Activated CD4-positive, alpha-beta memory T cell treated with anti-CD3 and anti-CD28 coated beads for 36 hours (primary cell): ENCODE measurements at regions of chr12 and their contacts with region 1.

Region 1: DNA sequence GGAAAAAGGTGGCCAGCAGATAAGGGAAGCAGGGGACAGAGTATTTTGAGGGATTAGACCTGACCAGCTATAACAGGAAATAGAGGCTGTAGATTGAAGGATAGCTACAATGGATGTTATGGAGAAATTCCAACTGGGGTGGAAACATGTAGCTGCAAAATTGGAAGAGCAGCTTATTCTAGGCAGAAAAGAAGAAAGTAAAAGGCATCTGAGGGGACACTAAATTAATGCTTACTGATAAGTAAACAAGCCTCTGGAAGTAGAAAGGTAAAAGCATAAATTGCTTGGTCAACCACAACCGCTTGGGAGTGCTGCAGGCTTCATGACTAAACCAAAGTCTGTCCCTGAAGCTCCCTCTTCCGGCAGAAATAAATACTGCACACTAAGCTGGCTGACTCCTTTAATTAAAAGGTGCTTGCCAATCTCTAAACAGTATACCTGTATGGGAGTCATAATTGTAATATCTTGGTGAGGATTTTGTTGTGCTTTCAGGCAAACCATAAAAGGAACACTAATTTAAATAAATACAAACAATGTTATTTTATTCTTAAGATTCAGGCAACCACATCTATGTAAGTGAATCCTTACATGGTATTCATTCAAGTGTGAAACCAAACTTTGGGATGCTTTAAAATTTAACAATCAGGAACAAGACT is 7.7 kb downstream of the UBC start:
- DNase-seq: peak; percentile 90
- H3K4me3 Mint-ChIP-seq: no peak overlapping the region
- H3K27ac Mint-ChIP-seq: peak overlapping the region; percentile 25
- H3K4me1 Mint-ChIP-seq: peaks cover 24% of the 10 kb centered on the region
- H3K27me3 Mint-ChIP-seq: no peaks in the 10 kb centered on the region

Region 2: DNA sequence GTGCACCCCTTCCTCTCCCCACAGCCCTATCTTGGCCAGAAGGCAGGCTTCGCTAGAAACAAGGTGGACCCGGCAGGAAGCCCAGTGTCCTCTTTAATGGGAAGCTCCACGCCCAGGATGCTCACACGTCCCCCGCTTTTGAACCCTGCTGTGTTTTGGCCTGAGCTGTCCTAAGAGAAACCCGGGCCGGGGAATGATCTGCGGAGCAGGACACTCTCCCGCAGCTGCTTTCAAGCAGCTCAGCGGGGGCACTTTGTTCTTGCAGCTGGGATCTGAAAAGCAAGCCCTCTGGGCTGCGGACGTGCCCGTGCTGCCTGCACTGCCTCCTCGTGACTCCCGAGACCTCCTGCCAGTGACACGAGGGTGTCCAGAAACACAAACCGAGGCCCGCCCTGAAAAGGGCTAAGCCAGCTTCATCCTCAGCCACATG is 73.0 kb before region 1 on chr12:
- CTCF ChIA-PET with region 1: no interaction called
- POLR2A ChIA-PET with region 1: no interaction called
- intact Hi-C with region 1: no loop called
- DNase-seq: no peak
- H3K4me3 Mint-ChIP-seq: no peak overlapping the region
- H3K27ac Mint-ChIP-seq: no peak overlapping the region
- H3K4me1 Mint-ChIP-seq: no peaks in the 10 kb centered on the region
- H3K27me3 Mint-ChIP-seq: no peaks in the 10 kb centered on the region

Region 3: GRCh38 chr12:124863416-124864325 is 43.1 kb before region 1 on chr12 and contains the start of gene SCARB1:
- CTCF ChIA-PET with region 1: interaction called, 3 read pairs
- POLR2A ChIA-PET with region 1: no interaction called
- intact Hi-C with region 1: loop called (anchors 5 kb)
- DNase-seq: peak; percentile 88
- H3K4me3 Mint-ChIP-seq: peak within 1 kb of the TSS; percentile 71
- H3K27ac Mint-ChIP-seq: peak within 1 kb of the TSS; percentile 44
- H3K4me1 Mint-ChIP-seq: peaks cover 18% of the 10 kb centered on the region
- H3K27me3 Mint-ChIP-seq: peaks cover 3% of the 10 kb centered on the region
- total RNA-seq, gene SCARB1: 11.4 to 12.8 TPM

Region 4: DNA sequence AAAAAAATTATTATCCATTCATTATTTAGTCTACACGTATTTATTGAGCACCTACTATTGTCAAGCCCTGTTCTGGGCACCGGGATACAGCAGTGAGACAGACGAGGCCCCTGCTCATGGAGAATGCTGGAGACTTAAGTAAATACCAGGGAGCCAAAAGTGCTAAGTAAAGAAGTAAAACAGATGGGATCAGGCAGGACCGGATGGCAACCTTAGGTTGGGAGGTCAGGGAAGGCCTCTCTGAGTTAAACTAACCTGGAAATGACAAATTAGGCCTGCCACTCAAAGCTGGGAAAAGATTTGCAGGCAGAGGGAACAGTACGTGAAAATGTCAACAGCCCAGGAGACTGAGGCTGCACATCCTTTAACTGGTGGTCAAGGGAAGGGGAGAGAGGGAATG is 11.6 kb before region 1 on chr12:
- CTCF ChIA-PET with region 1: interaction called, 11 read pairs
- POLR2A ChIA-PET with region 1: interaction called, 3 read pairs
- intact Hi-C with region 1: no loop called
- DNase-seq: no peak
- H3K4me3 Mint-ChIP-seq: no peak overlapping the region
- H3K27ac Mint-ChIP-seq: no peak overlapping the region
- H3K4me1 Mint-ChIP-seq: peaks cover 16% of the 10 kb centered on the region
- H3K27me3 Mint-ChIP-seq: no peaks in the 10 kb centered on the region

Region 5: DNA sequence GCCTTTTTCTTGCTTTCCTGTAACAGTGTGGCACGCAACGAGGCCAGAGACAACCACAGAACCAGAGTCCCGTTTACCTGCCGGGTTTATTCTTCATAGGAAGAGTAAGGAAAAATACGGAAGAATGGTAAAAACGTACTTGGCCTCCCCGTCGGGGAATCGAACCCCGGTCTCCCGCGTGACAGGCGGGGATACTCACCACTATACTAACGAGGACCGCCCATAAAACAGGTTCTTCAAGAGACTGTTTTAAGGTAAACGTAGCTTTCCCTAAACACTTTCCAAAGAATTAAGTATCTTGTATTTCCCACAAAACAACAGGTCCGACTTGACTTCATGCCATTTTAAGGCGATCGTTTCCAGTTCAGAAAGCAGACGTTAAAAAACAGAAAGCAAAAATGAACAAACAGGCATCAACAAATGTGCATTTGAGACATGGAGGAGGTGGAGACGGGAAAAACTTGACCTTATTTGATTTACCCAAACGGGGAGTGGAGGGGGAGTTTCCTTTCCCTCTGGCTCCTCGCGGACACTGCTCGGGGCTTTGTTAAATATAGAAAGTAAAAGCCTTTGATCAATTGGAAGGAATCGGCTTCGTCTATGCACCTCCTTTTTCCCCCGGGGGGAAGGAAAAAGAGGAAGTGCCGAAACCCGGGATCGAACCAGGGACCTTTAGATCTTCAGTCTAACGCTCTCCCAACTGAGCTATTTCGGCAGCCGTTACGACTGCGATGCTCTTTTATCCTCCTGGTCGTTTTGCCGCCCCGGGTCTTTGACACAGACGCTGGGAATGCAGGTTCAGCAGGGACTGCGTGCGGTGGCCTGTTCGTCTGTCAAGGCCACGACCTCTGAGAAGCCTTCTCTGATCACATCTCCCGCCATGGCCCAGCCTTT is 20.7 kb after region 1 on chr12:
- CTCF ChIA-PET with region 1: interaction called, 11 read pairs
- POLR2A ChIA-PET with region 1: interaction called, 3 read pairs
- intact Hi-C with region 1: no loop called
- DNase-seq: peak; percentile 97
- H3K4me3 Mint-ChIP-seq: peak overlapping the region; percentile 94
- H3K27ac Mint-ChIP-seq: peak overlapping the region; percentile 96
- H3K4me1 Mint-ChIP-seq: peaks cover 32% of the 10 kb centered on the region
- H3K27me3 Mint-ChIP-seq: peaks cover 5% of the 10 kb centered on the region

Region 6: DNA sequence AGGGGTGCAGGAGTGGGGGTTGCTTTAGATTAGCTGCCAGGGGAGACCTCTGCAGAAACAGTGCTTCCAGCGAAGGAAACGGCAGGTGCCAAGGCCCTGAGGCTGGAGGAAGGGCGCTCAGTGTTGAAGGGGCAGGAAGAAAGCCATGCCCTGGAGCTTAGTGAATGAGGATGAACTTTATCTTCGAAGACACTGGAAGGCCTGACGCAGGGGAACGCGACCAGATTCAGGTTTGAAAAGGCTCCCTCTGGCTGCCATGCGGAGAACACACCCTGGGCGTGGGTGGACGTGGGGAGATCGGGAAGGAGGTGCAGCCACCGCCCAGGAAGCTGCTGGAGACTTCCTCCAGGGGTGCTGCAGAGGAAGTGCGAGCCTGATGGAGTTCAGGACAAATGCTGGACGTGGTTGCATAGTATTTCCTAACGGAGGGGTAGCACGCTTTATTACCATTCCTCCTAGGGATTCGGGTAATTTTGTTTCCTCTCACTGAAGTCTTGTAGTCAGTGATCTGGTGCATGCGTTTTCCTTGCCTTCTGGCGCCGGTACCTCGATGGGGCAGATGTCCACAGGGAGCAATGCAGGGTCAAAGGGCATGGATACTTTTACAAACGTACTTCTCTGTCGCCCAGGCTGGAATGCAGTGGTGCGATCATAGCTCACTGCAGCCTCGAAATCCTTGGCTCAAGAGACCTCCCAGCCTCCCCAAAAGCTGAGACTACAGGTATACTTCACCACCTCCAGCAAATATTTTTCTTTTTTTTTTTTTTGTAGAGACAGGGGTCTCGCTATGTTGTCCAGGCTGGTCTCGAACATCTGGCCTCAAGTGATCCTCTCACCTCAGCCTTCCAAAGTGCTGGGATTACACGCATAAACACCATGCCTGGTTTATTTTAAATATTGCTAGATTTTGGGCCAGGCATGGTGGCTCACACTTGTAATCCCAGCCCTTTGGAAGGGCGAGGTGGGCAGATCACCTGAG is 34.1 kb after region 1 on chr12:
- CTCF ChIA-PET with region 1: interaction called, 202 read pairs
- POLR2A ChIA-PET with region 1: interaction called, 18 read pairs
- intact Hi-C with region 1: loop called (anchors 1 kb)
- DNase-seq: peak; percentile 95
- H3K4me3 Mint-ChIP-seq: no peak overlapping the region
- H3K27ac Mint-ChIP-seq: no peak overlapping the region
- H3K4me1 Mint-ChIP-seq: peaks cover 10% of the 10 kb centered on the region
- H3K27me3 Mint-ChIP-seq: no peaks in the 10 kb centered on the region

Region 7: DNA sequence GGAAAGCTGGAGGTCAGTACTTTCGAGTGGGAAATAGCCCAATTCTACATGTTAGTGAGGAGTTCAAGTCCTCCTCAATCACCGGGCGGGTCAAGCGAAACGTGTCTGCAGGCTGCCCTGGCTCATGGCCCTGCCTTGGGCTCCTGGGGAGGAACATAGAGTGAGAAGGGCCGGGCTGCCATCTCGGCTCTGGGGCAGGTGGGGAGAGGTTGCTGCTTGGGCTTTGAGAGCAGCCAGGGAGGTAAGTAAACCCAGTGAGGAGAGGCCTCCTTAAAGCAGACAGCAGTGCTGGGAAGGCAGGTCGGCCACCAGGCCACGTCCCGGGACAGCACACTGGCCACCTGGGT is 39.7 kb after region 1 on chr12:
- CTCF ChIA-PET with region 1: interaction called, 202 read pairs
- POLR2A ChIA-PET with region 1: interaction called, 18 read pairs
- intact Hi-C with region 1: no loop called
- DNase-seq: no peak
- H3K4me3 Mint-ChIP-seq: no peak overlapping the region
- H3K27ac Mint-ChIP-seq: no peak overlapping the region
- H3K4me1 Mint-ChIP-seq: peaks cover 2% of the 10 kb centered on the region
- H3K27me3 Mint-ChIP-seq: no peaks in the 10 kb centered on the region